Aorta (tissue), 5 donors: ENCODE measurements at regions of chr6 and their contacts with region 1.

Region 1: GRCh38 chr6:31901953-31902643 is at the start of gene ZBTB12:
- DNase-seq: peak; percentile 93 to 95
- ATAC-seq: peak; percentile 89
- H3K4me3 ChIP-seq: peak within 1 kb of the TSS; percentile 79 to 87
- H3K27ac ChIP-seq: peak within 1 kb of the TSS in 1 of 2 donors; percentile 56
- H3K4me1 ChIP-seq: no peaks in the 10 kb centered on the region
- H3K27me3 ChIP-seq: no peaks in the 10 kb centered on the region
- total RNA-seq, gene ZBTB12: 1.8 to 4.9 TPM

Region 2: GRCh38 chr6:31945507-31946369 is 43.6 kb after region 1 on chr6 and contains the start of gene CFB:
- intact Hi-C with region 1: loop called (anchors 5 kb)
- DNase-seq: peak; percentile 93 to 95
- ATAC-seq: peak; percentile 88
- H3K4me3 ChIP-seq: no peak within 1 kb of the TSS
- H3K27ac ChIP-seq: peak within 1 kb of the TSS; percentile 36 to 85
- H3K4me1 ChIP-seq: no peaks in the 10 kb centered on the region
- H3K27me3 ChIP-seq: no peaks in the 10 kb centered on the region
- total RNA-seq, gene CFB: 56.7 to 141 TPM

Region 3: GRCh38 chr6:31952140-31952805 is 50.2 kb after region 1 on chr6:
- intact Hi-C with region 1: loop called (anchors 5 kb)
- DNase-seq: peak; percentile 80 to 90
- ATAC-seq: peak; percentile 62
- H3K4me3 ChIP-seq: no peak overlapping the region
- H3K27ac ChIP-seq: no peak overlapping the region
- H3K4me1 ChIP-seq: no peaks in the 10 kb centered on the region
- H3K27me3 ChIP-seq: no peaks in the 10 kb centered on the region

Region 4: DNA sequence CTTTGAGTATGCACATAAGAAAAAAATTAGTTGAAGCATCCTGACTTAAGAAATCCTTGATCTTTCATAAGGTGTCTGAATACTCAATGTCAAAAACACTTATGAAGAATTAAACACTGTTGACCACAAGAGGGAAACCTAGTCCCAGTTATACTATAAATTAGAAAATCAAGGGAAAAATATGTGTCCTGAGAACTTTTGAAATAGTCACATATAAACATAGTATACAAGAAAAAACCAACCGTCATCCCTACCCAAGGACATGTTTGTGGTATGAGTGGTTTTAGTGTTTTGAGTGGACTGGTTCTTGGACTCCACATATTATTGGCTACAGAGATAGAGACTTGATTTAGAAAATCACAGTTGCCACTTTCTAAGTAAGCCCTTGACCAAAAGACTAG is 530.0 kb after region 1 on chr6:
- intact Hi-C with region 1: no loop called
- DNase-seq: no peak
- ATAC-seq: no peak
- H3K4me3 ChIP-seq: no peak overlapping the region
- H3K27ac ChIP-seq: no peak overlapping the region
- H3K4me1 ChIP-seq: no peaks in the 10 kb centered on the region
- H3K27me3 ChIP-seq: no peaks in the 10 kb centered on the region